Posterior cingulate gyrus (tissue), 11 donors: ENCODE measurements at regions of chr7 and their contacts with region 1.

Region 1: DNA sequence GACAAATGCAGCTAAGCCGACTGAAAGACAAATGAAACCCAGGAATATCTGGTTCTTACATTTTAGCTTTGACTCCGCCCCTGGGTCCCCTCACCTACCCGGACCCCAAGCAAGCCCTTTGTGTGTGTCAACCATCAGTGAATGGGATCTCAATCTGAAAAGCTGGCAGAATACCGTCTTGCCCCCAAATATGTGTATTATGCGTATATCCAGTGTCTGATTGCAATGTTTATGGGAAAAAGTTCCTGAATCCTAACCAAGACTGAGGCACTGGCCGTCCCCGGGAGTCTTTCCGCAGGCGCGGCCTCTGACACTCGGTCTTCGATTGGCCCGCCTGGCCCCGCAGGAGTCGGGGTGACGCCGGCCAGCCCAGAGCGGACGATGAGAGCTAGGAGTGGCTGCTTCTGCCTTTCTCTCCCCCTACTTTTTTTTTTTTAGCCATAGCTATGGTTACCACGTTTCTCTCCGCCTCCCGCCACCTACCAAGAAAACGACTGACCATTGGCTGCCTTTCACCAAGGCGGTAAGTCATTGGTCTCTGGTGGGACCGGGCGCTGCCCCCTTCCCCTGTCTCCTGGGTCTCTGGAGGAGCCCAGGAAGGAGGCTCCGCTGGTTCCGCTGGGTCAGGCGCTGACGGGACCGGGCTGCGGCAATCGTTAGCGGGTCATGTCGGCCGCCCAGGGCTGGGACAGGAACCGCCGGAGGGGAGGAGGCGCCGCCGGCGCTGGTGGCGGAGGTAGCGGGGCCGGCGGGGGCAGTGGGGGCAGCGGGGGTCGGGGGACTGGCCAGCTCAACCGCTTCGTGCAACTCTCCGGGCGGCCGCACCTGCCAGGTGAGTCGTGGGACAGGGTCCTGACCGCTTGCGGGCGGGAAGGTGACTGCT is at the start of gene KLHDC10:
- DNase-seq: peak; percentile 94 to 100 (median 97)

Region 2: DNA sequence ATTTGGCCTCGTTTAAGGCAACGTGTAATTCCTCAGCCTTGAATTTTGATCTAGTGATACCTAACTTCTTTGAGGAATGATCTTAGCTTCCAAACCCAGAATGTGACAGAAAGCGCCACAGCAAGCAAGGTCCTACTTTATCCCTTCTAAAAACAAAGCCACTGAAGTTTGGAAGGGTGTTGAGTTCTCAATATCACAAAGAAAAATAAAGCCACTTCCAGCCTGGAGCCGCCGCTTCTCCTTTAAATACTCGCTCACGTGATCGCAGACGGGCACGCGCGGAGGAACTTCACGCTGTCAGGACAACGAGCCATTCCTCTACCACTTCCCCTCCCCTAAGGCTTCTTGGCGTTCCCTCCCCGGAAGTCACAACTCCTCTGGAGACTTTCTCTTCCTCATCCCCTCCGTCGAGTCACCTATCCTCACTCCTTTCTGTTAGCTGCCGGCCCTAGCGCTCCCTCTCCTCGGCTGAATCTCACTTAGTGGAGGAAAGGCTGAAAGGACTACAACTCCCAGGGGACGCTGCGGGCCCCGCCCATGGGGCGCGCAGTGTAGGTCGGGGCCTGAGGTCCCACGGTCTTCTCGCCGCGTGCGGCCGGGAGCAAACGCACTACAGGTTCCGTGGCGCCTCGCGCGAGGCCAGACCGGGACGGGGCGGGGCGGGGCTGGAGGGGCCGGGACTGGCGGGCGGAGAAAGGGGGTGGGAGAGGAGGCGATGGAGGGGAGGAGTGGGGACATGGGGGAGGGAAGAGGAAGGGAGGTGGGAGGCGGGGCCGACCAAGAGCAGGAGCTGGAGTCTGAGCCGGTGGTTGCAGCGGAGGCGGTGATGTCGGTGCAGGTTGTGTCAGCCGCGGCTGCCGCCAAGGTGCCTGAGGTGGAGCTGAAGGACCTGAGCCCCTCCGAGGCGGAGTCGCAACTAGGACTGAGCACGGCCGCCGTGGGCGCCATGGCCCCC is 845.7 kb before region 1 on chr7 and contains the start of gene AHCYL2:
- intact Hi-C with region 1: no loop called
- DNase-seq: peak; percentile 94 to 100 (median 98)

Region 3: DNA sequence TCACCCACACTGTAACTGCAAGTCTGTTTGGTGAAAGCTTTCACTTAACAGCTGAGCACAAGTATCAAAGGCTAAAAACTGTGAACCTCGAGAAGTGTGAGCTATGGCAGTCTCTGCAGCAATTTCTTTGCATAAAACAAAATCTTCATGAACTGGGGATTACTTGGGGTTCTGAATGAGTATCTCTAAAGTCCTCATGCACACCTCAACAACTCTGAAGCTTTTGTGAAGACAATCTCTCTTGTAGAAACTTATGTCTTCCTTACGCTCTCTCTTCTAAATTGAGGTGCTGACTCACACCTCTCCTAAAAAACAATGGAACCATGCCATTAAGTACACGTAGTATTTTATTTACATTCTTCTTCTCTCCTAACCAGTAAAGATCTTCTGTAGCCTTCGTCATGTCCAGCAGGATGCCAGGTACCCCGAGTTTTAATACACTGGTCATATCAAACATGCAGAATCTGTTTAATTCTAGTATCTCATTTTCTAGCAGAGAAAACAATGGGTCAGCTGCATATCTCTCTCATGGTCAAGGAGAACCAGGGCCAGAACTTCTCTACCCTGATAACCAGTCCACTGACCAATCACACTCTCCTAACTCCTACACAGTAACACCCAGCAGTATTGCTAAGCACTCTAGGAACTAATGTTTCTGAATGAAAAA is 194.3 kb before region 1 on chr7:
- intact Hi-C with region 1: no loop called
- DNase-seq: no peak

Region 4: GRCh38 chr7:130050773-130051125 is 19.5 kb before region 1 on chr7:
- intact Hi-C with region 1: loop called (anchors 2 kb)
- DNase-seq: no peak

Region 5: GRCh38 chr7:130668257-130669084 is 598.3 kb after region 1 on chr7 and contains the start of gene COPG2:
- intact Hi-C with region 1: loop called (anchors 2 kb)
- DNase-seq: peak; percentile 69 to 97 (median 80)

Region 6: DNA sequence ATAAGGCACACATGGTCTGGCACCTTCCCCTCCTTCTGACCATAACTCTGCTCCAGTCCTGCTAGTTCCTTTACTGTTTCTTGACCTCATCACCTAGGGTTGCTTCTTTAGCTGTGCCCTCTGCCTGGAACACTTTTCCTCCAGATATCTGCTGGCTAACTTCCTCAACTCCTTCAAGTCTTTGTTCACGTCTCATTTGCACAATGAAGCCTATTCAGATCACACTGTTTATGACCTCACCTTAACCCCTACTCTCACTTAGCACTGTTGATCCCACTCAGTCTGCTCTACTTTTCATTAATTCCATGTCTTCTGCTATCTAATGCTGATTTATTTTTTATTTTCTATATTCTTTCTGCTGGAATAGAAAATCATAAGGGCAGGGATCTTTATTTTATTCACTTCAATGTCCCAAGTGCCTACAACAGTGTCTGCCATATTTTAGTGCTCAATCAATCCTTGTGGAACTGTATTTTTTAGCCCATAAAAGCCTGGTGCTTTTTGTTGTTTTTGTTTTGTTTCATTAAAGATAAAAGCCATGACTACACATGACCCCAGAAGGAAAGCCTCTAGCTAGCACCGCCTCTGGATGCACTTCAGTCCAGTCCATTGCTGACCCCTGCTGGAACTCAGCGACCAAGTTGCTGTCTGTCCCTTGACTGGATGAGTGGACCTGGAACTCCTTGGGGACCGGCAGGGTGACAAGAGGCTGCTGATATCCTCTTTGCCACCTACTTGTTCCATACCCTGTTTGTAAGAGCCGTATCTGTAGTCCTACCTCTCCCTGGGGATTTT is 651.5 kb after region 1 on chr7:
- intact Hi-C with region 1: loop called (anchors 2 kb)
- DNase-seq: peak in 8 of 10 donors; percentile 59 to 94 (median 72)

Region 7: DNA sequence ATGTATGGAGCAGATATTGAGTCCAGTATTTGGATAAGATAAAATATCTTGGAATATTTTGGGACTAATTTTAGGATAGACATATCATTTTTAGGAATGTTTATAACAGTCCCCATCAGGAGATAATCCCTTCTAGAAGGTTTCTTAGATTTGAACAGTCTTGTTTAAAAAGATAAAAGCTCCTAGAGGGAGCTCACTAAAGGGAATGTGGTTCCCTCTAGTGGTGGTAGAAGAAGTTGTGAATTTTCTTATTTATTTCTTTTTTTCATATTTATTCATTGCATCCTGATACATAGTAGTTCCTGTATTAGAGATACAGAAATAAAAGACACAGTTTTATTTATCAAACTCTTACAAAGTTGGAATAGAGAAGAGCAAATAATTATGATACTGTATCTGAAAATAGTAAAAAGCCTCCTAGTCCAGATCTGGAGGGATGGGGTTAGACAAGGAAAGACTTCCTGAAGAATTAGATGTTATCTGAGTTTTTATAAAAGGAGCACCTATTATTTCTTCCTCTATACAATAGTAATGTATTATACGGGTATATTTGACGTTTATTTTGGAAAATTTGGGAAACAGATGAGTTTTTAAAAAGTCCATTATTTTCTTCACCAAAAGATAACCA is 688.3 kb after region 1 on chr7:
- intact Hi-C with region 1: loop called (anchors 10 kb)
- DNase-seq: no peak

Region 8: GRCh38 chr7:130831817-130832481 is 761.7 kb after region 1 on chr7:
- intact Hi-C with region 1: loop called (anchors 2 kb)
- DNase-seq: no peak